AG04449 (cell line): ENCODE measurements at regions of chr4 and their contacts with region 1.

Region 1: DNA sequence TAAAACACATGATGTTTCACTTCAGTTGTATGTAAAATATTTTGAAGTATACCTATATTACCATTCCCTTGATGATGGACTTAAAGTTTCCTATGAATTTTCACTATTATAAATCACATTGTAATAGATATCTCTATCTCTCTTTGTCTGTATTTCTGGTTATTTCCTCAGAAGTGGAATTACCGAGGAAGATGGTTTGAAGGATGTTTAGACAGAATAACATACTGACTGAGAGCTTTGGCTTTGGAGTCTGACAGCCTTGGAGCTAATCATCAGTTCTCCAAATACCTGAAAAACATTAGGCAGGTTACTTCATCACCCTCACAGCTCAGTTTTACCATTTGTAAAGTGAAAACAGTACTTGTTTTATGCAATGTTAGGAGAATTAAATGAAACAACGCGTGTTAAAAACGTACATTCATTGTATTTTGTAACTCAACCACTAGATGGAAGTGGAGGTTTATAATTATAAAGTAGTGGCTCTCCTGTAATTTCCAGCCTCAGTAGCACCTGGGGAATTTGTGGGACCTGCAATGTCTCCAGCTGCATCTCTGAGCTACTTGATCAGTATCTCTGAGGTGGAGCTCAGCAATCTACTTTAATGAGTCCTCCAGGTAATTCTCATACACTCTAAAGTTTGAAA is 14.3 kb downstream of the JCHAIN start:
- DNase-seq: no peak
- H3K4me3 ChIP-seq: no peak overlapping the region
- CTCF ChIP-seq: peak; percentile 14

Region 2: GRCh38 chr4:70637239-70637913 is 14.6 kb before region 1 on chr4:
- CTCF ChIA-PET with region 1: interaction called, 20 read pairs
- POLR2A ChIA-PET with region 1: no interaction called
- DNase-seq: no peak
- H3K4me3 ChIP-seq: no peak overlapping the region
- CTCF ChIP-seq: no peak

Region 3: DNA sequence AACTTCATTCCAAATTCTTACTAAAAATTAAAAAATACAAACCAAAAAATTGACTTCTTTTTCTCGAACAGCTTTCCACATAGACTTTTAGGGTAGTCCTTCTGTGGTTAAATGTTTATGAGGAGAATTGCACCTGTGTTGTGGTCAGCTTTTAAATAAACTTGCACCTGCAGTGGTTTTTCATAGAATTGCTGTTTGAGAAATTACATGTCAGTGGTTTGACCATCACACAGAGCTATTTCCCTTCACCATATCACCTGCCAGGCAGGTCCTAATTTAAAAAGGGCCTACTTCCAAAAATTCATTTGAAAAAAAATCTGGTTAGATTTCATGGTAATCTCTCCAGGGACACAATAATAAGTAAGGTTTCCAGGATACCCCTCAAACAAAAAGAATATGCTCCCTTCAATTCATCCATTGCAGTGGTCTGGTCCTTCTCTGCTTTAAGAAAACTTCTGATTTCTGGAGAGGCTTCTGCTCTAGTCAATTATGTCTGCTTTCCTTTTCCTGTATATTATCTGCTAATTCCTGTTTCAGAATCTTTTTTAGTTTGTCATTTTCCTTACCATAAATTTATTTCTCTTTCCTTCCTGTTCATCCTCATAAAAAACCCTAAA is 26.5 kb after region 1 on chr4:
- CTCF ChIA-PET with region 1: interaction called, 15 read pairs
- POLR2A ChIA-PET with region 1: no interaction called
- DNase-seq: no peak
- H3K4me3 ChIP-seq: no peak overlapping the region
- CTCF ChIP-seq: no peak

Region 4: DNA sequence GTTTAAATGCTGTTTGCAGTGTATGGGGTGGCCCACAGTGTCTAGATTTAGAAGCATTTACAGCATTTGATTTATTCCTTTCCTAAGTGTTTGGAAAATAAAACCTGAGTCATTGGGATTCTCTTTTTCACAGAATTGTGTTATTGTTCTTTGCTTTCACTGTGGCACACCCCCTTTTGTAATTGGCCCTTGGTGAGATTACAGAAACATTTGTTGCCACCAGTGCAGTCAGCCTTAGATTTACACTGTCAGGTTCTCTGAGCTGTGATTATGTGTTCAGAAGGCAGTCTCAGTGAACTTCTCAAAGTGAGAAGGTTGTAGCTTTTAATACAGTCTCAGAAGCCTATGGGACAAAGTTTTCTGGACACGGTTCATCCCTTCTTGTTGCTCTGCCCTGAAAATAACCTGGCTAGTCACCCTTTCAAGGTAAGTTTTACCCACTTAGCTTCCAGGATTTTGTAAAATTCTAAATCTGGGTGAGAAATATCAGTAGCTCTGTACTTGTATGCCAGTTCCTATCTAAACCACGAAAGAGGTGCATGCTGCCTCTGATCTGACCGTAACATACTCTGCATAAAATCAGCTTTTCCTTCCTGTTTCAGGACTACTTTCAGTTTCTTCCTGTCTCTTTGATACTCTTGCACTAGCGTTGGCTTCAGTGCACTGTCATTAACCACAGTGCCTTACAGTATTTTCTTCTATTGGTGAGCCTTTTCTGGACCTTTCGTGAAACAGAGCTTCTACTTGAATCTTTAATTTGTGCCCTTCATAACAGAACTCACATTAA is 82.4 kb after region 1 on chr4:
- CTCF ChIA-PET with region 1: interaction called, 12 read pairs
- POLR2A ChIA-PET with region 1: no interaction called
- DNase-seq: no peak
- H3K4me3 ChIP-seq: peak overlapping the region; percentile 37
- CTCF ChIP-seq: no peak

Region 5: GRCh38 chr4:71009890-71010588 is 358.1 kb after region 1 on chr4:
- CTCF ChIA-PET with region 1: interaction called, 22 read pairs
- POLR2A ChIA-PET with region 1: no interaction called
- DNase-seq: no peak
- H3K4me3 ChIP-seq: no peak overlapping the region
- CTCF ChIP-seq: peak; percentile 26